ENCODE measurements at regions of chr2 and their contacts with region 1.

Region 1: DNA sequence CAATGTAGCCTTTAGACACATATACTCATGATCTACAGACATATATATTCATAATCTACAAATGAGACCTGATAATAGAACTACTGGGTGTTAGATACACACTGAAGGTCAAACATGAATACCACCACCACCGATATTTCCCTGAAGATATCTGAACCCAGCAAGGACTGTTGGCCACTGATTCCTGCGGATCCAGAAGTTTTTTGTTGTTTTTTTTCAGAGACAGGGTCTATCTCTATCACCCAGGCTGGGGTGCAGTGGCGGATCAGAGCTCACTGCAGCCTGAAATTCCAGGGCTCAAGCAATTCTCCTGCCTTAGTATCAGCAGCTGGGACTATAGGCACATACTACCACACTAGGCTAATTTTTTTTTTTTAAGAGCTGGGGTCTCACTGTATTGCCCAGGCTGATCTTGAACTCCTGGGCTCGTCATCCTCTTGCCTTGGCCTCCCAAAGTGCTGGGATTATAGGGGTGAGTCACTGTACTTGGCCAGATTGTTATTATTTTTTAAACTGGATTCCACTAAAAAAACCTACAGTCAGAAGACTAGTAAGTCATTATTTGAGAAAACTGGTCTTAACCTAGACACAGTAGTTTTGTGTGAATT is 1.8 kb downstream of the METTL5 start:
- DNase-seq: no peak
- H3K4me3 ChIP-seq: no peak overlapping the region
- H3K27ac ChIP-seq: no peak overlapping the region
- H3K4me1 ChIP-seq: peaks cover 39% of the 10 kb centered on the region
- H3K27me3 ChIP-seq: no peaks in the 10 kb centered on the region
- CTCF ChIP-seq: no peak
- POLR2A ChIP-seq: no peak

Region 2: DNA sequence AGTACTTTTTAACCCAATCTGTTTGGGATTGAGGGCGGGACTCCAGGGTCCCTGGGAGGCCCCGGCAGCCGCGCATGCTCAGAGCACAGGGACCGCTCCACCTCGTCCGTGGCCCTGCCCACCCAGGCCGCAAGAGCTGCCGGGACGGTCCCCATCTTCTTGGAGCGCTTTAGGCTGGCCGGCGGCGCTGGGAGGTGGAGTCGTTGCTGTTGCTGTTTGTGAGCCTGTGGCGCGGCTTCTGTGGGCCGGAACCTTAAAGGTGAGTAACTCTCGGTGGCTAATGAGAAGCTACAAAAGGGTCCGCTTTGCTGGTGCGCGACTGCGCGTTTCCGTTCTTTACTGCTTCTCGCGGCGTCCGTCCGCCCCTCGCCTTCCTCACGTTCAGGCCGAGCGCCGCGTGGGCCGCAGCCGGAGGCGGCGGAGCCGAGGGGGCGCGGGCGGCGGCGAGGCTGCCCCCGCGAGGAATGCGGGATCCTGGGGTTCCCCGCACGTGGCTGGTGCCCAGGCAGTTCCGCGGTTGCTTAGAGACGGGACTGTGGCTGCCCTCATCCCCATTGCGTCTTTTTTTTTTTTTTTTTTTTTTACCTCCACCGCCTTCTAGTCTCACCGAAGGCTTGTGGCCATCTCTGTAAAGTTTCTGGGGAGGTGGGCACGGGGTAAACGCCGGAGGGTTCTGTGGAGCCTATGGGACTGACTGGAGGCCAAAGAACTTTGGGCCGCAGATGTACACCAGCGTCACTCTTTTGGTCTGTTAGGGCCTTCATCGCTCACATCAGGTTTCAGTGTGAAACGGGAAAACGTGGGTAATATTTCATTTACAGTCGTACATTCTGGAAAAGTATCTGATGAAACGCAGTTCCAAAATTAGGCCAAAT is 23.9 kb before region 1 on chr2 and contains the start of gene SSB:
- intact Hi-C with region 1: loop called (anchors 1 kb)
- DNase-seq: peak in 1 of 2 donors; percentile 92
- H3K4me3 ChIP-seq: peak within 1 kb of the TSS; percentile 71 to 82
- H3K27ac ChIP-seq: peak within 1 kb of the TSS; percentile 87
- H3K4me1 ChIP-seq: peaks cover 29% of the 10 kb centered on the region
- H3K27me3 ChIP-seq: no peaks in the 10 kb centered on the region
- CTCF ChIP-seq: no peak
- POLR2A ChIP-seq: peak in 1 of 2 donors; percentile 80
- total RNA-seq, gene SSB: 47.1 TPM